Activated B cell treated with CpG ODN at 0.5 μM for 24 hours (primary cell): ENCODE measurements at regions of chr12 and their contacts with region 1.

Region 1: GRCh38 chr12:89709157-89709994 is 738 bp upstream of the ATP2B1 start:
- DNase-seq: peak; percentile 97
- ATAC-seq: peak; percentile 75
- H3K4me3 Mint-ChIP-seq: peak overlapping the region; percentile 91
- H3K27ac Mint-ChIP-seq: peak overlapping the region; percentile 94
- H3K4me1 Mint-ChIP-seq: peaks cover 40% of the 10 kb centered on the region
- H3K27me3 Mint-ChIP-seq: no peaks in the 10 kb centered on the region
- CTCF ChIP-seq: no peak

Region 2: GRCh38 chr12:89524541-89525285 is 184.7 kb before region 1 on chr12 and contains the start of gene GALNT4:
- CTCF ChIA-PET with region 1: no interaction called
- POLR2A ChIA-PET with region 1: interaction called, 9 read pairs
- intact Hi-C with region 1: loop called (anchors 1 kb)
- DNase-seq: peak; percentile 75
- ATAC-seq: peak; percentile 78
- H3K4me3 Mint-ChIP-seq: peak within 1 kb of the TSS; percentile 99
- H3K27ac Mint-ChIP-seq: peak within 1 kb of the TSS; percentile 95
- H3K4me1 Mint-ChIP-seq: peaks cover 60% of the 10 kb centered on the region
- H3K27me3 Mint-ChIP-seq: no peaks in the 10 kb centered on the region
- CTCF ChIP-seq: no peak
- total RNA-seq, gene GALNT4: 6.2 and 6.3 TPM in 2 replicates

Region 3: GRCh38 chr12:89742337-89743022 is 33.1 kb after region 1 on chr12:
- CTCF ChIA-PET with region 1: no interaction called
- POLR2A ChIA-PET with region 1: interaction called, 7 read pairs
- intact Hi-C with region 1: loop called (anchors 1 kb)
- DNase-seq: no peak
- ATAC-seq: peak; percentile 84
- H3K4me3 Mint-ChIP-seq: peak overlapping the region; percentile 47
- H3K27ac Mint-ChIP-seq: peak overlapping the region; percentile 91
- H3K4me1 Mint-ChIP-seq: peaks cover 19% of the 10 kb centered on the region
- H3K27me3 Mint-ChIP-seq: no peaks in the 10 kb centered on the region
- CTCF ChIP-seq: no peak

Region 4: GRCh38 chr12:89856431-89856830 is 147.1 kb after region 1 on chr12:
- CTCF ChIA-PET with region 1: interaction called, 6 read pairs
- POLR2A ChIA-PET with region 1: interaction called, 64 read pairs
- intact Hi-C with region 1: loop called (anchors 1 kb)
- DNase-seq: no peak
- ATAC-seq: peak; percentile 86
- H3K4me3 Mint-ChIP-seq: peak overlapping the region; percentile 68
- H3K27ac Mint-ChIP-seq: peak overlapping the region; percentile 91
- H3K4me1 Mint-ChIP-seq: peaks cover 64% of the 10 kb centered on the region
- H3K27me3 Mint-ChIP-seq: no peaks in the 10 kb centered on the region
- CTCF ChIP-seq: no peak

Region 5: DNA sequence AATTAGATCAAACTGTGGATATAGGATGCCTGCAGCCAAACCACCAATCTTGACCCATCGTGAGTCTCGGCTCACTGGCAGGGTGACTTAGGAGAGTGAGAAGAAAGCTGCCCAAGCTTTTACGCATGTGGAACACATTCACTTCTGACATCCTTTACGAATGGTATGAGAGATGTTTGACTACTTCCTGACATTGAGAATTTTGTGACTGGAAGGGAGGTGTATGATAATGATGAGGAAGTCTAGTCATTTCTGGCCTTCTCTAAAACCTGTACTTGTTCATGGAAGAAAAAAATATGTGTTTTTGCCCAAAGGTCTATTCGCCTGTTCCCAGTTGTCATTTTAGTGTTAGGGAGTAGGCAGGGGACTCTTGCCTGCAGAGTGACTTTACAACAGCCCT is 226.4 kb after region 1 on chr12:
- CTCF ChIA-PET with region 1: interaction called, 3 read pairs
- POLR2A ChIA-PET with region 1: interaction called, 20 read pairs
- intact Hi-C with region 1: no loop called
- DNase-seq: no peak
- ATAC-seq: peak; percentile 77
- H3K4me3 Mint-ChIP-seq: peak overlapping the region; percentile 61
- H3K27ac Mint-ChIP-seq: peak overlapping the region; percentile 92
- H3K4me1 Mint-ChIP-seq: peaks cover 66% of the 10 kb centered on the region
- H3K27me3 Mint-ChIP-seq: no peaks in the 10 kb centered on the region
- CTCF ChIP-seq: no peak

Region 6: DNA sequence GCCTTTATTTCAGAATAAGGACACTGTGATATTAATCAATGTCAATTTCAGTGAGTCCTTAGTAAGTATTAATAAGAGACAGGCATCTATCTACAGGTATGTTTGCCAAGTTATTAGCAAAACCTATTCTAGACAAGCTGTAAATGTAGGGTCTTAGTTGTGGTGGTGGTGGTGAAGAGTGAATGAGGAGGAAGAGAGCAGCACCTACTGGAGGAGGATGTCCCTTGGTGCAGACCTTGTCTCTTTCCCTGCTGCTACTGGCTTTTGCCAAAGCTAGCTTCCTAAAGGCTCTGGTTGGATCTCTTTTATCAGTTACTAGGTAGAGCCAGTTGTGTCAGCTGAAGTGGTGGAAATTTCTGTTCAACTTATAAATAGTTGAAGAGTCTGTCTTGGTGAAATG is 304.0 kb after region 1 on chr12:
- CTCF ChIA-PET with region 1: interaction called, 15 read pairs
- POLR2A ChIA-PET with region 1: interaction called, 30 read pairs
- intact Hi-C with region 1: loop called (anchors 1 kb)
- DNase-seq: no peak
- ATAC-seq: peak; percentile 90
- H3K4me3 Mint-ChIP-seq: no peak overlapping the region
- H3K27ac Mint-ChIP-seq: no peak overlapping the region
- H3K4me1 Mint-ChIP-seq: peaks cover 16% of the 10 kb centered on the region
- H3K27me3 Mint-ChIP-seq: no peaks in the 10 kb centered on the region
- CTCF ChIP-seq: no peak